A549 (cell line): ENCODE measurements at regions of chr7 and their contacts with region 1.

Region 1: DNA sequence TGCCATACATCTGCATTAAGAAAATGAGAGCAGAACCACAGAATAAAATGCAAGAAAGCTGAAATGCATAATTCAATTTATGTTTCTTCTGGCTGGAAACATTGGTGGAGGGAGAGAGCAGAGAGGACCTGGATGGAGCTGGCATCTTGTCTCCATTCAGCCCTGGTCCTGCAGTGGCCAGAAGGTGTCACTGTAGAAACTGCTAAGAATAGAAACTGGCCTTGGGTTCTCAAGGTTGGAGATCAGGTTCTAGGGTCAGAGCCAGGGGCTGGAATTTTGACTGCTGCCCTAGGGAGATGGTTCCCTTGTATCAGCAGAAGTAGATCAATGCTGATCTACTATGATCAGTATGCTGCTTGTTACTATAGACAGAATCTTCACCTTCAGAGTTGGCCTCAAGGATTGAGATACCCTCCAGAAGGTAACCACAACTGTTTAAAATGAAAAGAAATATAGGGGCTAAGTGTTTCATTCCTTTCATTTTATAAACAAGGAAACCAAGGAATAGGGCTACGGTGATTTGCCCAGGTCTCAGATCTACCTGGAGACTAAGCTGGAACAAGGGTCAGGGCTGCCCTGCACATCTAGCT is 13.1 kb downstream of the TAS2R41 start:
- DNase-seq: peak in 1 of 2 experiments; percentile 45
- ATAC-seq: peak; percentile 81 to 92; a peak in 5 of 6 replicates
- H3K4me3 ChIP-seq: no peak overlapping the region
- H3K27ac ChIP-seq: no peak overlapping the region
- H3K4me1 ChIP-seq: peaks cover 10% of the 10 kb centered on the region; the same call in 1 of the 3 replicates
- CTCF ChIP-seq: peak; percentile 69
- EP300 ChIP-seq: no peak
- POLR2A ChIP-seq: no peak
- RAD21 ChIP-seq: peak; percentile 76 to 84

Region 2: DNA sequence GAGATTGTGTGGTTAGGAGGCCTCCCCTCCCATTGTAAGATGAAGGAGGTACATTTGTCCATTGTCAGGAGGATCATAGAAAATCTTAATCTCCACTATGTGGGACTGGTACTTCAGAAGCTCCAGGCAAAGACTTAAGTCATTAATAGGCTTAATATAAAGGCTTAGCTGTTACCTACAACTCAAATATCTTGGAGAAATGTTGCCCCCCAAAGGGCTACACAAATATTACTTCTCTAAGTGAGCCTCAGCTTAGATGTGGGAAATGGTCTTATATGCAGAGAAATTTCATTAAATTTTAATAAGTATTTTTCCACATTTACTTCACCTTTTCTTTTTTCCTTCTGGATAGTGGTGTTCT is 14.1 kb after region 1 on chr7:
- CTCF ChIA-PET with region 1: interaction called, 14 read pairs
- POLR2A ChIA-PET with region 1: no interaction called
- DNase-seq: no peak
- ATAC-seq: no peak
- H3K4me3 ChIP-seq: no peak overlapping the region
- H3K27ac ChIP-seq: no peak overlapping the region
- H3K4me1 ChIP-seq: no peaks in the 10 kb centered on the region
- CTCF ChIP-seq: no peak
- EP300 ChIP-seq: no peak
- POLR2A ChIP-seq: no peak
- RAD21 ChIP-seq: no peak

Region 3: DNA sequence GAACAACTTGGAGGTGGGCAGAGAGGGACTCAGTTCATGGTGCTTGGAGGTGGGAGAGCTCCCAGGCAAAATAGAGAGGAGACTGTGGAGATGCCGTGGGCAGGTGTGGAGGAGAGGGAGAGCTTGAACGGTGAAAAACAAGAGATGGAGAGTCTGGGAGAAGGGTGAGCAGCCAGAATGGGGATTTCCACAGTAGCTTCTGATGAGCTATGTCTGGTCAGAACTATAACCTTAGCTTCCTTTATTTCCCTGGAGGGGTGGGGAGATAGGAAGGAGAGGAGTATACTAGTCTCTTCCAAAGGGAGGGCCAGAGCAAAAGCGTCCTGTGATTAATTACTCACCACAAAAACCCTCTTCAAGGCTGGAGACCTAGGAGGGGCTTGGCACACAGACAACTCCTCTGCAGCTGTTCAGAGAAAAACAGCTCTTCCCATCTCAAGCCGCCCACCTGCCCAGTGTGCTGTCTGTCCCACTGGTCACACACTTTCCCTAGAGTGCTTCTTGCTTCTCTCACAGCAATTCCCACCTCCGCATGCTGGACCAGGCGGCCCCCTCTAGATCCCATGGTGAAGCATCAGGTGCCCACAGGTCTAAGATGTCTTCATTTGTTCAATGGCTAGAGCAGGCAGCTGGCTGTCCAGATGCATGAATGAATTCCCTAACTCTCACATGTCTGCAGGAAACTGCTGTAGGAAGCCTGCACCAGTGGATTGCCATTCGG is 28.8 kb after region 1 on chr7:
- CTCF ChIA-PET with region 1: interaction called, 18 read pairs
- POLR2A ChIA-PET with region 1: no interaction called
- DNase-seq: peak in 1 of 2 experiments; percentile 37
- ATAC-seq: peak; percentile 25 to 35; a peak in 3 of 6 replicates
- H3K4me3 ChIP-seq: no peak overlapping the region
- H3K27ac ChIP-seq: peak overlapping the region; percentile 7 to 70; a peak in 3 of 6 replicates
- H3K4me1 ChIP-seq: peaks cover 25% of the 10 kb centered on the region
- CTCF ChIP-seq: no peak
- EP300 ChIP-seq: no peak
- POLR2A ChIP-seq: no peak
- RAD21 ChIP-seq: no peak

Region 4: DNA sequence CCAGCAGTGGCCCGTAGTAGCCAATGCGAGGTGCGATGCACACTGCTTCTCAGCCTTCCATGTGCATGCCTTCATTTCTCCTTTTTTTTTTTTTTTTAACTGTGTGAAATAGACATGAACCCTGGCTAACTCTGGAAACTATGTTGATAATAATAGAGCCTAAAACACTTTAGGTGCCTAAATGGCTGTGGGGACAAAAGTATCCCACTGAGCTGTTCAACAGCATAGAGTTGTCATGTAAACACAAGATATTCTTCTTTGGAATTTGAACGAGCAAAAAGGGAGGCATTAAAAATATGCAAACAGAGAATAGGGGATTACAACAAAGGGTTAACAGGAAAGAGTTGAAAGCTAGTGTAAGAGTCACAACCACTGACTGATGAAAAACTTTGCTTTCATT is 1074.8 kb after region 1 on chr7:
- CTCF ChIA-PET with region 1: no interaction called
- POLR2A ChIA-PET with region 1: no interaction called
- DNase-seq: no peak
- ATAC-seq: no peak
- H3K4me3 ChIP-seq: no peak overlapping the region
- H3K27ac ChIP-seq: no peak overlapping the region
- H3K4me1 ChIP-seq: no peaks in the 10 kb centered on the region
- CTCF ChIP-seq: no peak
- EP300 ChIP-seq: no peak
- POLR2A ChIP-seq: no peak
- RAD21 ChIP-seq: no peak